ENCODE measurements at regions of chr6 and their contacts with region 1.

Region 1: DNA sequence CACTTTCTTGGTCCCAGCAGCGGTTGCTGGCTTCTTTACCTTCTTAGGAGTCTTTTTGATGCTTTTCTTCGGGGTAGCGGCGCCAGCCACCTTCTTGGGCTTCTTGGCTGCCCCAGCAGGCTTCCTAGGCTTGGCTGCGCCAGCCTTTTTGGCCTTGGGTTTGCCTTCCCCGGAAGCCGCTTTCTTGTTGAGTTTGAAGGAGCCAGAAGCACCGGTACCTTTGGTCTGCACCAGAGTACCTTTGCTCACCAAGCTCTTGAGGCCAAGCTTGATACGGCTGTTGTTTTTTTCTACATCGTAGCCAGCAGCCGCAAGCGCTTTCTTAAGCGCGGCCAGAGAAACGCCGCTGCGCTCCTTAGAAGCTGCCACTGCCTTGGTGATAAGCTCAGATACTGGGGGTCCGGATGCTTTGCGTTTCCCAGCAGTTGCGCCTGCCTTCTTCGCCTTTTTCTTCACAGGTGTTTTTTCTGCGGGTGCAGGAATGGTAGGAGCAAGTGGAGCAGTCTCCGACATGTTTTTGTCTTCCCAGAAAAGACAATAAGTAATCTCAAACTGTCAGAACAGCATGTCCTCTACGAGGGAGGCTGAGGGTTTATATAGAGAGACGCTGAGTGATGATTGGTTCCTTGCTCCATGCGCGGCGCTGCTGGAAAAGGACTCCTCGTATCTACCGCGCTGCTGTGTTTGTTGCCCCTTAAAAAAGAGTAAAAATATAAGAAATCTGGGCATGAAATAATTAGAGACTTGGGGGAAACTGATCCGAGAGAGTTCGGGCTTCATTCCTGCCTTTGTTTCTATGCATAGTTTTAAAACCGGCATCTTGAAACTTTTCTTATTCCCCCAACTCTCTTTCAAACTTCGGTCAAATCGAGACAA is 130.3 kb upstream of the BTN3A2 start:
- DNase-seq: peak; percentile 90
- H3K4me3 Mint-ChIP-seq: peak overlapping the region; percentile 82
- H3K27ac Mint-ChIP-seq: peak overlapping the region; percentile 85
- H3K4me1 Mint-ChIP-seq: peaks cover 32% of the 10 kb centered on the region
- H3K27me3 Mint-ChIP-seq: no peaks in the 10 kb centered on the region
- CTCF ChIP-seq: no peak

Region 2: GRCh38 chr6:26249957-26250697 is 15.5 kb after region 1 on chr6:
- CTCF ChIA-PET with region 1: interaction called, 9 read pairs
- POLR2A ChIA-PET with region 1: interaction called, 4 read pairs
- intact Hi-C with region 1: loop called (anchors 2 kb)
- DNase-seq: peak; percentile 87
- H3K4me3 Mint-ChIP-seq: peak overlapping the region; percentile 94
- H3K27ac Mint-ChIP-seq: peak overlapping the region; percentile 63
- H3K4me1 Mint-ChIP-seq: peaks cover 7% of the 10 kb centered on the region
- H3K27me3 Mint-ChIP-seq: no peaks in the 10 kb centered on the region
- CTCF ChIP-seq: peak; percentile 42

Measured in MCF 10A (cell line).